Endothelial cell of umbilical vein (primary cell): ENCODE measurements at regions of chr20 and their contacts with region 1.

Region 1: GRCh38 chr20:58388882-58389323 is at the start of gene VAPB:
- DNase-seq: peak; percentile 97
- H3K4me3 ChIP-seq: peak within 1 kb of the TSS; percentile 54 to 98 (median 81)
- H3K27ac ChIP-seq: peak within 1 kb of the TSS; percentile 74
- H3K4me1 ChIP-seq: peaks cover 14% of the 10 kb centered on the region
- H3K27me3 ChIP-seq: no peaks in the 10 kb centered on the region
- CTCF ChIP-seq: no peak
- POLR2A ChIP-seq: peak; percentile 76
- total RNA-seq, gene VAPB: 47.8 and 48.9 TPM in 2 replicates

Region 2: GRCh38 chr20:58342104-58342960 is 46.6 kb before region 1 on chr20:
- CTCF ChIA-PET with region 1: no interaction called
- POLR2A ChIA-PET with region 1: interaction called, 3 read pairs
- dilution Hi-C with region 1: no loop called
- intact Hi-C with region 1: loop called (anchors 5 kb)
- DNase-seq: peak; percentile 69
- H3K4me3 ChIP-seq: peak overlapping the region in 1 of 3 experiments; percentile 24
- H3K27ac ChIP-seq: peak overlapping the region; percentile 79
- H3K4me1 ChIP-seq: peaks cover 36% of the 10 kb centered on the region
- H3K27me3 ChIP-seq: no peaks in the 10 kb centered on the region
- CTCF ChIP-seq: no peak
- POLR2A ChIP-seq: no peak

Region 3: DNA sequence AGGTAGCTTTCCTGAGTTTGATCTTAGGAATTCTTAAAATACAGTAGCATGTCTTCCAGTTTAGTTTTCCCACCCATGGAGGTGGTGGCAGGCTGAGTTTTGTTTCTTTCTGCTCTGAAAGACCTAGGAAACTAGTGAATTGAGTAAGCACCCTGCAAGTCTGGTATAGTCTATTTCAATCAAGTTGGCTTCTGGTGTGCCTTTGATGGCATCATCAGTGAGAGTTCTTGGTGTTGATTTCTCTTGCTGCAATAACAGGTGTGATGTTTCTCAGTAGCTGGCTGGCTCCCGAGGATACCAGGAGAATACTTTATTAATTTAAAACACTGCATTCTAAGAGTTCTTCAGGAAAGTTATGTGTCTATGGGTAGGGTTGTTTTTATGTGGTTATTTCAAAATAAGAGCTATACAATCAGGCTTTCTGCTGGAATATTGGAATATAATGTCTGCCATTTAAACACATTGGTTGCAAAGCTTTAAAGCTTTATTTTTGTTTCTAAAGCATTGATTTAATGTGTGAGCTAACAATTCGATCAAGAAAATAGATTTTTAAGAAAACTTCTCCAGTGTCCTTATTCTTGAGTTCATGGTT is 19.2 kb after region 1 on chr20:
- CTCF ChIA-PET with region 1: interaction called, 5 read pairs
- POLR2A ChIA-PET with region 1: interaction called, 5 read pairs
- dilution Hi-C with region 1: no loop called
- intact Hi-C with region 1: loop called (anchors 2 kb)
- DNase-seq: no peak
- H3K4me3 ChIP-seq: no peak overlapping the region
- H3K27ac ChIP-seq: peak overlapping the region; percentile 41
- H3K4me1 ChIP-seq: peaks cover 32% of the 10 kb centered on the region
- H3K27me3 ChIP-seq: no peaks in the 10 kb centered on the region
- CTCF ChIP-seq: no peak
- POLR2A ChIP-seq: no peak

Region 4: GRCh38 chr20:58447511-58448391 is 58.8 kb after region 1 on chr20:
- CTCF ChIA-PET with region 1: interaction called, 5 read pairs
- POLR2A ChIA-PET with region 1: no interaction called
- dilution Hi-C with region 1: no loop called
- intact Hi-C with region 1: loop called (anchors 2 kb)
- DNase-seq: peak; percentile 66
- H3K4me3 ChIP-seq: no peak overlapping the region
- H3K27ac ChIP-seq: no peak overlapping the region
- H3K4me1 ChIP-seq: no peaks in the 10 kb centered on the region
- H3K27me3 ChIP-seq: no peaks in the 10 kb centered on the region
- CTCF ChIP-seq: peak; percentile 68 to 73
- POLR2A ChIP-seq: no peak